ENCODE measurements at regions of chrX and their contacts with region 1.

Region 1: DNA sequence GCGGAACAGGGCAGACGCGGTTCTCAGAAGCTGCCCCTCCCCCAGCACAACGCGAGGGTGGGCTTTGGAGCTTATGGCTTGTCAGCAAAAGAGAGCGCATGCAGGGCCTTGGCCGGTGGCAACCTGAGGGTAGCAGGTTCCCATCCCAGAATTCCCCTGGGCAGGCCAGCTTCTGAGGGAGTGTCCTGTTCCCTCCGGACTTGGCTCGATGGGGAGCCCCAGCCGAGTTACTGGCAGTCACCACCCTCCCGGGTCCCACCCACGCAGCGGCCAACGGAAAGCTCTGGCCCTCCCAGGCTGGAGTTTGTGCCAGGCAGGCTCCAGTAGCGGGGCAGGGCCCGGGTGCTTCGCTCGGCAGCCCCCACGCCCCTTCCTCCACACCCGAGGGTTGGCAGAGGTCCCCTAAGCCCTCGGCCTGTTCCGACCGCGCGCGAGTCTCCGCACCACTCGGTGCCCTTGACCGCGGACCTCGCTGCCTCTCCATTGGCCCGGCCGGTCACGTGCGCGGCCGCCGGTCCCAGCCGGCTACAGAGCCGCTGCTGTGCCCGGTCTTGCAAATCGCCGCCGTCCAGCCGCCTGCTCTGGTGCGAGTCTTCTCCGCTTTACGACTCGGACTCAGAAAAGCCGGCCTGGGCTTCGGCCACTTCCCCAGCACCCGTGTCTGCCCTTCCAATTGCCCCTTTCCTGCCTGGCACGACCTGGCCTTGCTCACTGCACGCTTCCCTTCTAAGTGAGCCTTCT is 20.9 kb upstream of the MTM1 start:
- DNase-seq: peak; percentile 19
- H3K4me3 Mint-ChIP-seq: peak overlapping the region; percentile 54
- H3K27ac Mint-ChIP-seq: peak overlapping the region; percentile 64
- H3K4me1 Mint-ChIP-seq: peaks cover 29% of the 10 kb centered on the region
- H3K27me3 Mint-ChIP-seq: no peaks in the 10 kb centered on the region

Region 2: DNA sequence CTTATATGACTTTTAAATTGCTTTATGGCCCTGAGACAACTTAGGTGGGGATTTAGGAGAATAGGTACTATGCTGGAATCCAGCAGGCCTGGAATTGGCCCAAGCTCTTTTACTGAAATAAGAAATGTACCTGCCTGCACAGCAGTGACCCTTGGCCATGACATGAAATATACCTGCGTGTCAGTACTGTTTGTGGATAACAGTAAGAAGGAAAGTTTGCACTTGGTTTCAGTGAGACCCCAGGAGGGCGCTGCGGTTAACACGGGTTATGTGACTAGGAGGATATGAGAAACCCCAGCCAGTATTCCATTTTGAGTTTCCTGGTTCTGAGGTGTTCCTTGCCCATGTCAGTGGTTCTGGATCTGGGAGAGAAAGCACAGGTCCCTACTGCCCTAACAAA is 26.2 kb after region 1 on chrX:
- CTCF ChIA-PET with region 1: interaction called, 4 read pairs
- POLR2A ChIA-PET with region 1: interaction called, 43 read pairs
- DNase-seq: peak; percentile 46
- H3K4me3 Mint-ChIP-seq: peak overlapping the region; percentile 85
- H3K27ac Mint-ChIP-seq: peak overlapping the region; percentile 93
- H3K4me1 Mint-ChIP-seq: peaks cover 79% of the 10 kb centered on the region
- H3K27me3 Mint-ChIP-seq: no peaks in the 10 kb centered on the region